Panc1 (cell line): ENCODE measurements at regions of chr1 and their contacts with region 1.

Region 1: GRCh38 chr1:43687301-43688108 is 19.8 kb upstream of the ST3GAL3 start:
- DNase-seq: no peak
- ATAC-seq: no peak
- H3K4me3 ChIP-seq: no peak overlapping the region
- H3K27ac ChIP-seq: no peak overlapping the region
- H3K4me1 ChIP-seq: no peaks in the 10 kb centered on the region
- H3K27me3 ChIP-seq: no peaks in the 10 kb centered on the region
- CTCF ChIP-seq: no peak

Region 2: GRCh38 chr1:43171876-43172526 is 515.5 kb before region 1 on chr1 and contains the starts of genes CFAP57 and EBNA1BP2:
- CTCF ChIA-PET with region 1: no interaction called
- POLR2A ChIA-PET with region 1: interaction called, 11 read pairs
- in situ Hi-C with region 1: no loop called
- intact Hi-C with region 1: no loop called
- DNase-seq: peak; percentile 92
- ATAC-seq: peak; percentile 97
- H3K4me3 ChIP-seq: peak within 1 kb of the TSS; percentile 91 to 94
- H3K27ac ChIP-seq: peak within 1 kb of the TSS; percentile 88
- H3K4me1 ChIP-seq: peaks cover 10% of the 10 kb centered on the region; the same call in 1 of the 2 replicates
- H3K27me3 ChIP-seq: no peaks in the 10 kb centered on the region
- CTCF ChIP-seq: no peak
- total RNA-seq, gene CFAP57: 0.69 TPM
- total RNA-seq, gene EBNA1BP2: 144 TPM